ENCODE measurements at regions of chr14 and their contacts with region 1.

Region 1: GRCh38 chr14:68191567-68192321 is 372.2 kb downstream of the RAD51B start:
- DNase-seq: peak; percentile 55
- H3K4me3 Mint-ChIP-seq: no peak overlapping the region
- H3K27ac Mint-ChIP-seq: peak overlapping the region; percentile 87
- H3K4me1 Mint-ChIP-seq: peaks cover 51% of the 10 kb centered on the region
- H3K27me3 Mint-ChIP-seq: no peaks in the 10 kb centered on the region
- CTCF ChIP-seq: no peak

Region 2: DNA sequence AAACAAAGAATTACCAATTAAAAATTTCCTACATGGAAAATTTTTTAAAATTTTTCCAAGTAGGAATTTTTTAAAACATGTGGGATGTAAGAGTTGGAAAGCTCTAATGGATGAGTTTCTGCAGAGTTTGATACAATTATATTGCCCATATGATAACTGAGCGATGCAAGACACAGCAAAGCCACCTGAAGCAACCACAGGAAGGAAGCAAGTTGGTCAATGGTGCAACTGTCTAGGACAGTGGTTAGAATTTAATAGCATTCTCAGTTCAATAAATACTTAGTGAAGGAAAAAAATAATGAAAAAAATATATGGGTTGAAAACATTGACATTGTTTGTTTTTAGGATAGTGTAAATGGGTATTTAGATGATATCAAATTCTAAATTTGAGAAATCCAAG is 1181.1 kb before region 1 on chr14:
- CTCF ChIA-PET with region 1: no interaction called
- intact Hi-C with region 1: no loop called
- DNase-seq: no peak
- H3K4me3 Mint-ChIP-seq: no peak overlapping the region
- H3K27ac Mint-ChIP-seq: no peak overlapping the region
- H3K4me1 Mint-ChIP-seq: no peaks in the 10 kb centered on the region
- H3K27me3 Mint-ChIP-seq: no peaks in the 10 kb centered on the region
- CTCF ChIP-seq: no peak

Region 3: GRCh38 chr14:68146807-68147206 is 44.9 kb before region 1 on chr14:
- CTCF ChIA-PET with region 1: interaction called, 4 read pairs
- intact Hi-C with region 1: loop called (anchors 2 kb)
- DNase-seq: peak; percentile 35
- H3K4me3 Mint-ChIP-seq: no peak overlapping the region
- H3K27ac Mint-ChIP-seq: peak overlapping the region; percentile 93
- H3K4me1 Mint-ChIP-seq: peaks cover 59% of the 10 kb centered on the region
- H3K27me3 Mint-ChIP-seq: no peaks in the 10 kb centered on the region
- CTCF ChIP-seq: no peak

Region 4: DNA sequence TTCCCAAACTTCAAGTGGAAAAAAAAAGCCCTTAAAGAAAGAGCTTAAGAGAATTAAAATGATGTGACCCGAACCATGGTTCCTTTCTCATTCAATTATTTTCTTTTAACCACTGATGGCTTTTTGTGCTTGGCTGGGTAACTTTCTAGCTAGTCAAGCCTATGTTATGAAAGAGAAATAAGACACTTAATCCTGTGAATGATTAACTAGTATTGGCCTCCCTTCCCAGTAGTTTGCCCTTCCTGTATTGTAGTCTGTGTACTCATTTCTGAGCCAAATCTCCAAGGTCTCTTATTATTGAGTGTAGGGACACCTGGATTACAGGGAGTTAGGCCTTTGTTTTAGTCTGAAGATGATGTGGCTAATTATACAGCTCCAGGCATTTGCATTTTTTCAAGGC is 19.1 kb before region 1 on chr14:
- CTCF ChIA-PET with region 1: interaction called, 11 read pairs
- intact Hi-C with region 1: loop called (anchors 2 kb)
- DNase-seq: no peak
- H3K4me3 Mint-ChIP-seq: no peak overlapping the region
- H3K27ac Mint-ChIP-seq: peak overlapping the region; percentile 99
- H3K4me1 Mint-ChIP-seq: peaks cover 65% of the 10 kb centered on the region
- H3K27me3 Mint-ChIP-seq: no peaks in the 10 kb centered on the region
- CTCF ChIP-seq: no peak

Measured in Calu3 (cell line).